Activated CD4-positive, alpha-beta memory T cell treated with anti-CD3 and anti-CD28 coated beads, Interleukin-2, amount 10 ng/mL, durations not matched to agents 7 days and 5 days (primary cell): ENCODE measurements at regions of chr16 and their contacts with region 1.

Region 1: DNA sequence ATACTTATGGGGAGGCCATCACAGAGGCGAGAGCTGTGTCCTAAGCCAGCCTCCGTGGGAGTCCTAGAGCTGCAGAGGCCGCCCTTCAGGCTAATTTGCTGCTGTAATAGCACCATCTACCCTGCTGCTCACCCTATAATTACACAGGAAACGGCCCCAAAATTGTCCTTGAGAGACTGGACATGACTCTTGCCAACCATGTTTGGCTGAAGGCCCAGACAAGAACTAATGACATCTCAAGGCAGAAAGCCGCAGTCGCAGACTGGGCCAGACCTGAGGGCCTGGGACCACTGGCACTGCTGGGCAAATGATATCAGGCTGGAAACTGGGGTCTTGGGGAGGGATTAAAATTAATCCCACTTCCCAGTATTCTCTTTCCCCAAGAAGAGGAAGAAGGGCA is 24.1 kb downstream of the PSMD7 start:
- DNase-seq: no peak
- H3K4me3 Mint-ChIP-seq: no peak overlapping the region
- H3K27ac Mint-ChIP-seq: no peak overlapping the region
- H3K4me1 Mint-ChIP-seq: no peaks in the 10 kb centered on the region
- H3K27me3 Mint-ChIP-seq: no peaks in the 10 kb centered on the region

Region 2: GRCh38 chr16:74296432-74297144 is 24.1 kb before region 1 on chr16 and contains the start of gene PSMD7:
- CTCF ChIA-PET with region 1: interaction called, 3 read pairs
- POLR2A ChIA-PET with region 1: interaction called, 10 read pairs
- DNase-seq: peak; percentile 92
- H3K4me3 Mint-ChIP-seq: peak within 1 kb of the TSS; percentile 87
- H3K27ac Mint-ChIP-seq: peak within 1 kb of the TSS; percentile 90
- H3K4me1 Mint-ChIP-seq: peaks cover 44% of the 10 kb centered on the region
- H3K27me3 Mint-ChIP-seq: no peaks in the 10 kb centered on the region
- total RNA-seq, gene PSMD7: 95.0 to 97.6 TPM